MCF 10A (cell line): ENCODE measurements at regions of chr12 and their contacts with region 1.

Region 1: DNA sequence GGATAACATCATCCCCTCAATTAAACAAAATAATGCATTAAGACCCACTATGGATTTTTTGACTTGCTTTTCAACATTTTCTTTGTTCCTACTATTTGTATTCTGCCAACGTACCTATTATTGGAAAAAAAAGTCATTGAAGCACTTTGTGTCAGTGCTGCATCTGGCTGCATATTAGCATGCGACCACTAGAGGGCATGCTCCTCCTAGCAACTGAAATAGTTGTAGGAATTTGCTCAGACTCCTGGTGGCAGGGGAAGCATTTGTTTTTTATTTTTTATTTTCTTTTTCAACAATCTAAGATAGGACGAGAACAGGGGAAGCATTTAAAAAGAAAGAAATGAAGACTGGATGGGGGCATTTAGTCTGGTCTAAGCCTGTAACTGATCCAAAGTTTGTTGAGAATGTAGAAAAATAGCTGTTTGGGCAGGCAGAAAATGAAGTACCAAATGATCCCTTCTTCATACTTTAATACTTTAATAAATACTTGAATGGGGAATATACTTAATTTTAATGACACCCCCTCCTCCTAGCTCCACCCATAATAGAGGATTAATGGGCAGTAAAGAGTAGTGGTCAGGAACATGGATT is 14.5 kb upstream of the CLEC4A start:
- DNase-seq: peak; percentile 70
- H3K4me3 Mint-ChIP-seq: no peak overlapping the region
- H3K27ac Mint-ChIP-seq: peak overlapping the region; percentile 29
- H3K4me1 Mint-ChIP-seq: no peaks in the 10 kb centered on the region
- H3K27me3 Mint-ChIP-seq: no peaks in the 10 kb centered on the region
- CTCF ChIP-seq: peak; percentile 91

Region 2: GRCh38 chr12:6470375-6471163 is 1638.3 kb before region 1 on chr12 and contains the start of gene VAMP1:
- CTCF ChIA-PET with region 1: no interaction called
- POLR2A ChIA-PET with region 1: no interaction called
- intact Hi-C with region 1: no loop called
- DNase-seq: peak; percentile 96
- H3K4me3 Mint-ChIP-seq: peak within 1 kb of the TSS; percentile 72
- H3K27ac Mint-ChIP-seq: peak within 1 kb of the TSS; percentile 87
- H3K4me1 Mint-ChIP-seq: peaks cover 13% of the 10 kb centered on the region
- H3K27me3 Mint-ChIP-seq: no peaks in the 10 kb centered on the region
- CTCF ChIP-seq: no peak
- total RNA-seq, gene VAMP1: 2.5 and 2.9 TPM in 2 replicates

Region 3: DNA sequence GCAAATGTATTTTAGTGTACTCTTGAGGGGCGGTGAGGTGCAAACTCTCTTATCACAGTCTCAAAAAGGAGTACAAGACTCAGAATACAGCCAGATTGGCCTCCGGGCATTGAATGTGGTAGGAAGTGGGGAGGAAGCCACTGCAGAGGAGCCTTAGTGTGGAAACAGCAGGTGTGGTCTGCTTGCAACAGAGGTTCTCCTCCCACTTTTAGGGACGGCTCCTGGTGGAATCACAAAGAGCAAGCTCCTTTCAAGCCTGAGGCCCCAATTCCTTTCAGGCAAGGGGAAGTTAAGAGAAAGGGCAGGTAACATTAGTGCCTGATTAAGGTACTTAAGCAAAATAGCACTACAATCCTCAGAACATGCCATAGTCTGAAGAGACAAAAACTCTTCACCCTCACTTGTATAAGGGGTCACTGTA is 149.2 kb before region 1 on chr12:
- CTCF ChIA-PET with region 1: no interaction called
- POLR2A ChIA-PET with region 1: no interaction called
- intact Hi-C with region 1: no loop called
- DNase-seq: peak; percentile 96
- H3K4me3 Mint-ChIP-seq: peak overlapping the region; percentile 60
- H3K27ac Mint-ChIP-seq: peak overlapping the region; percentile 92
- H3K4me1 Mint-ChIP-seq: peaks cover 27% of the 10 kb centered on the region
- H3K27me3 Mint-ChIP-seq: no peaks in the 10 kb centered on the region
- CTCF ChIP-seq: no peak

Region 4: DNA sequence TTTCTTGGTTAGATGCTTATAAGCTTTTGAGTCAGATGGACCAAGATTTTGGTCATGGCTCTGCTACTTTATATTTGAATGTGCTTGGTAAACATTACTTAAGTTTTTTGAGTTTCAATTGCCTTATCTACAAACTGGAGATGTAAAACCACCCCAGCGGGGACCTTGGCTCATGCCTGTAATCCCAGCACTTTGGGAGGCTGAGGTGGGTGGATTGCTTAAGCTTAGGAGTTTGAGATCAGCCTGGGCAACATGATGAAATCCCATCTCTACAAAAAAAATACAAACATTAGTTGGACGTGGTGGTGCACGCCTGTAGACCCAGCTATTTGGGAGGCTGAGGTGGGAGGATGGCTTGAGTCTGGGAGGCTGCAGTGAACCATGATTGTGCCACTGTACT is 15.6 kb before region 1 on chr12:
- CTCF ChIA-PET with region 1: interaction called, 11 read pairs
- POLR2A ChIA-PET with region 1: no interaction called
- intact Hi-C with region 1: no loop called
- DNase-seq: no peak
- H3K4me3 Mint-ChIP-seq: no peak overlapping the region
- H3K27ac Mint-ChIP-seq: no peak overlapping the region
- H3K4me1 Mint-ChIP-seq: peaks cover 8% of the 10 kb centered on the region
- H3K27me3 Mint-ChIP-seq: no peaks in the 10 kb centered on the region
- CTCF ChIP-seq: no peak

Region 5: DNA sequence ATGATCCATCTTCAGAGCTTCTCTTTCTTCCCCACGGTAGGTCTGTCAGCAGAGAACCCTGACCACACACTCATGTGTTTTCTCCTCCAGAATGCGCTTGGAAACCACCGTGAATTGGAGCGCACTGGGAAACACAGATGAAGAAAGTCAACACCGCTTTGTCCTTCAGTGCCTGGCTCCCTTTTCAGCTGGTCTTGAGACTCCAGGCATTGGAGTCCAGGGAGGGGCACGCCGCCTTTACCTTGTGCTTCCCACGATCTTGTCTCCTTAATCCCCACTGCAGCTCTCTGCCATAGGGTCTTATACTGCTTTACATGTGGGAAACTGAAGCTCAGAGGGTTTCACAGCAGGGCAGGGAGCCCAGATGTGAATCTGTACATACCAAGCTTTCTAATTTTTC is 117.5 kb after region 1 on chr12:
- CTCF ChIA-PET with region 1: interaction called, 25 read pairs
- POLR2A ChIA-PET with region 1: no interaction called
- intact Hi-C with region 1: no loop called
- DNase-seq: no peak
- H3K4me3 Mint-ChIP-seq: no peak overlapping the region
- H3K27ac Mint-ChIP-seq: no peak overlapping the region
- H3K4me1 Mint-ChIP-seq: no peaks in the 10 kb centered on the region
- H3K27me3 Mint-ChIP-seq: no peaks in the 10 kb centered on the region
- CTCF ChIP-seq: no peak